Activated CD4-positive, alpha-beta T cell treated with anti-CD3 and anti-CD28 coated beads for 36 hours (primary cell): ENCODE measurements at regions of chr13 and their contacts with region 1.

Region 1: DNA sequence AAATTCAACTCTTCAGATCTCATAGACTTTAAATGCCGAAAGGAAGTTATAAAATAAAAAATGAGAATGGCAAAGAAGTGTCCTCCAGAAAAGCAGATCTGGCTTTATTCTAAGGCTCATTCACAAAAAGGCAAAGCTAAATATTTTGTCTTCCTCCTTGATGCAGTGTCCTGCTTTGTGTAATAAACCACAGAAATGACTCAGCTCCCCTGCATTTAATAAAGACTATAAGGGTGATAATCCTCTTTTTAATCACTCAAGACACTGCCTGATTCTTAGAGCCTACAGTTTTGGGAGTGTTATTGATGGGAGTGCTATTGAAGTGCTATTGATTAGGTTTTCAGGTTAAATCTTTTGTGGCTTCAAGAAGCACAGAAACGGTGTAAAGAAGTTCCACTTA is 482.0 kb downstream of the PCDH20 start:
- DNase-seq: no peak
- ATAC-seq: no peak
- H3K4me3 Mint-ChIP-seq: no peak overlapping the region
- H3K27ac Mint-ChIP-seq: no peak overlapping the region
- H3K4me1 Mint-ChIP-seq: no peaks in the 10 kb centered on the region
- H3K27me3 Mint-ChIP-seq: no peaks in the 10 kb centered on the region

Region 2: GRCh38 chr13:60627071-60627686 is 306.5 kb before region 1 on chr13:
- CTCF ChIA-PET with region 1: no interaction called
- POLR2A ChIA-PET with region 1: no interaction called
- intact Hi-C with region 1: loop called in 1 of 2 experiments (anchors 5 kb)
- DNase-seq: peak; percentile 37
- ATAC-seq: peak; percentile 61
- H3K4me3 Mint-ChIP-seq: no peak overlapping the region
- H3K27ac Mint-ChIP-seq: no peak overlapping the region
- H3K4me1 Mint-ChIP-seq: no peaks in the 10 kb centered on the region
- H3K27me3 Mint-ChIP-seq: peaks cover 7% of the 10 kb centered on the region